Breast epithelium (tissue), 4 donors: ENCODE measurements at regions of chr3 and their contacts with region 1.

Region 1: DNA sequence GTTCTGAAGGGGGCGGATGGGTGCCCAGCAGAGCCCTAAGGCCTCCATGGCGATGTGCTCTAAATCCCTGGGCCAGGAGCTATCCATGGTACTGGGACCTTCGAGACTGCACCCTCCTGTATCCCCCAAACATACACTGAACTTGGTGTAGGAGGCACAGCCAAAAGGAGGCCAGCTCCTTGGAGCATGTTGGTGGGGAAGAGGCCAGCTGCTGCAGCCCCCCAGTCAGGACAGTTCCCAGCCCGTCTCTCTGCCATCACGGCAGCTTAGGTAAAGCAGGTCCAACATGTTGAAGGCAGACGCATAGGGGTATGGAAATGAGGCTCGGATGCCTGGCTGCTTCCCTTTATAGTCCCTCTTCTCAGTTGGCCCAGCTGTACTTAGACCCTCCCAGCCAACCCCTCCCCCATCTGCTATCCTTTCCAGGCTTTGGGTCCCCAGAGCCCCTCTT is 1.8 kb downstream of the CAMKV start:
- DNase-seq: no peak
- H3K4me3 ChIP-seq: no peak overlapping the region
- H3K27ac ChIP-seq: no peak overlapping the region
- H3K4me1 ChIP-seq: peaks cover 0 to 6% of the 10 kb centered on the region in 2 donors
- H3K27me3 ChIP-seq: peaks cover 3 to 22% of the 10 kb centered on the region in 2 donors
- CTCF ChIP-seq: no peak
- POLR2A ChIP-seq: no peak

Region 2: DNA sequence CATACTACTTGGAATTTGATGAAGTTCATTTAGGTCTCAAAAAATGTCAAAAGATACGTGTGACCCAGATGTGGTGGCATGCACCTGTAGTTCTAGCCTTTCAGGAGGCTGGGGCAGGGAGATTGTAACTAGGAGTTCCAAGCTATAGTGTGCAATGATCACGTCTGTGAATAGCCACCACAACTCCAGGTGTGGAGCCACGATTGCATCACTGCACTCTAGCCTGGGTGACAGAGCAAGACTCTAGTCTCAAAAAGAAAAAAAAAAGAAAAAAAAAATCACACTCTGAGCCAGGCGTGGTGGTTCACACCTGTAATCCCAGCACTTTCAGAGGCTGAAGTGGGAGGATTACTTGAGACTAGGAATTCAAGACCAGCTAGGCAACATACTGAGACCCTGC is 1865.9 kb before region 1 on chr3:
- intact Hi-C with region 1: loop called (anchors 10 kb)
- DNase-seq: no peak
- H3K4me3 ChIP-seq: no peak overlapping the region
- H3K27ac ChIP-seq: no peak overlapping the region
- H3K4me1 ChIP-seq: no peaks in the 10 kb centered on the region
- H3K27me3 ChIP-seq: no peaks in the 10 kb centered on the region
- CTCF ChIP-seq: no peak
- POLR2A ChIP-seq: no peak

Region 3: DNA sequence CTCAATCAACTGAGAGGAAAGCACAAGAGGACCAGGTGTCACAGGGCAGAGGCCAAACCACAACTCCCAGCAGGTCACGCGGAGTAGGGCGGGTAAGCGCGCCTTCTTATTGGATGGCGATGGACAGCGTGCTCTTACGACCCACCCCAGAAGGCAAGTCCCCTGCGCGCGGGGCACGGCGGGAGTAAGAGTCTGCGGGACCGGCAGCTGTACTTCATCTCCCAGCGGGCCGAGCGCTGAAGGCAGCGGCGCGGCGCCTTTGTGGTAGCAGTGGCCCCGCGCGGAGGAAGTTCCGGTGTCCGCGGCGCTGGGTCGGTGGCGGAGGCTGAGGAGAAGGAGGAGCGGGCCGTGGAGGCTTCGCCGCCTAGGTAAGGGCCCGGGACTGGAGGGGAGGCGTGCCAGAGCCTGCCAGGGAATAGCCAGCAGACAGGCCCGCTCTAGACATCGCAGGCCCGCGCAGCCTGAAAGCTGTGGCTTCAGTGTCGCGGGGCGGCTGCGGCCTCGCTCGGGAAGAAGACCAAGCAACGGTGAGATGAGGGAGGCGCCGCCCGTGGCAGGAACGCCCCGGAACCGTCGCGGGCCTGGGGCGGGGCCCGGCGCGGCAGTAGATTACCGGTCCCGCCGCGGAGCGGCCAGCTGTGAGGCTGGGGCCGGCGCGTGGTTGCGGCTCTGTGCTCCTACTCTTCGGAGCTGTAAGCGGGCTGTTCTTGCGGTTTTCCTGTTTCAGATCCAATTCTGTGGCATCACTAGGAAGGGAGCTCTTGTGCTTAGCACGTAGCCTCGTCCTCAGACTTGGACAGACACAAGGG is 72.2 kb after region 1 on chr3 and contains the start of gene RBM6:
- intact Hi-C with region 1: no loop called
- DNase-seq: peak; percentile 95 to 97
- H3K4me3 ChIP-seq: peak within 1 kb of the TSS; percentile 73 to 91 (median 85)
- H3K27ac ChIP-seq: peak within 1 kb of the TSS; percentile 93 to 98
- H3K4me1 ChIP-seq: peaks cover 4% of the 10 kb centered on the region in 2 donors
- H3K27me3 ChIP-seq: no peaks in the 10 kb centered on the region
- CTCF ChIP-seq: peak in 1 of 3 donors; percentile 12
- POLR2A ChIP-seq: peak; percentile 79
- total RNA-seq, gene RBM6: 92.2 to 158 (median 154) TPM

Region 4: GRCh38 chr3:50121416-50122032 is 253.6 kb after region 1 on chr3:
- intact Hi-C with region 1: no loop called
- DNase-seq: peak; percentile 64 to 85
- H3K4me3 ChIP-seq: no peak overlapping the region
- H3K27ac ChIP-seq: peak overlapping the region in 1 of 2 donors; percentile 30
- H3K4me1 ChIP-seq: peaks cover 21 to 23% of the 10 kb centered on the region in 2 donors
- H3K27me3 ChIP-seq: no peaks in the 10 kb centered on the region
- CTCF ChIP-seq: peak; percentile 84 to 94 (median 86)
- POLR2A ChIP-seq: no peak

Region 5: GRCh38 chr3:50186096-50186495 is 318.2 kb after region 1 on chr3:
- intact Hi-C with region 1: loop called (anchors 2 kb)
- DNase-seq: no peak
- H3K4me3 ChIP-seq: no peak overlapping the region
- H3K27ac ChIP-seq: no peak overlapping the region
- H3K4me1 ChIP-seq: peaks cover 0 to 5% of the 10 kb centered on the region in 2 donors
- H3K27me3 ChIP-seq: no peaks in the 10 kb centered on the region
- CTCF ChIP-seq: no peak
- POLR2A ChIP-seq: no peak